ENCODE measurements at regions of chr11 and their contacts with region 1.

Region 1: DNA sequence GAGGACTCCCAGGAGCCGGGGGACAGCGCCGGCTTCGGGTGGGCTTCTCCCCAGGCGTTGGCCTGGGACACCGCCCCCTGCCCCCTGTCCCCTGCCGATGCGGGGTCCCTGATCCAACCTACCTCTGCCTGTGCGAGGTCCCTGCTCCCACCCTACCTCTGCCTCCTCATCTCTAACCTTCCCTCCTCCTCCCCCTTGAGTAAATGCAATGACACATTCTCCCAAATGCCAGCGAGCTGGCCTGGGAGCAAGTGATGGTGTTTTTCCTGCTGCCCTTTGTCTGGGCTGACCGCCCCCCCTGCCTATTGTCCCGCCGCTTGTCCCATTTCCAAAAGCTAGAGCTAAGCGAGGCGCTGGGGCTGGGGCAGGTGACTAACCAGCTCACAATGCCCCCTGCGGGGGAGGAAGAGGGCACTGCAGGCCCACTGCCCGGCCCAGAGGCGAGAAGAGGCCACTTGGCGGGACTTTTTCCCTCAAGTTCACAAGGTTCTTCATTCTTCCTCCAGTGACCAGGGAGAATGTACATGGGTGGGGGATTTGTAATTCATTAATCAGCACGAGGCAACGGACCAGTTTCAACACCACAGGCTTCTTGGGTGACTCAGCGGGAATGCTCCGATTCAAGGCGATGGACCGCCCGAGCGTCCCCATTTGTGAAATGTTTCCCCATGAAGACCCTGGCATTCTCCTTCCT is 674 bp upstream of the CLCF1 start:
- DNase-seq: peak; percentile 95
- H3K4me3 ChIP-seq: peak overlapping the region; percentile 86
- H3K4me3 Mint-ChIP-seq: peak overlapping the region; percentile 95
- H3K27ac Mint-ChIP-seq: peak overlapping the region; percentile 83
- H3K4me1 ChIP-seq: peaks cover 31% of the 10 kb centered on the region
- H3K4me1 Mint-ChIP-seq: no peaks in the 10 kb centered on the region
- H3K27me3 ChIP-seq: no peaks in the 10 kb centered on the region
- H3K27me3 Mint-ChIP-seq: no peaks in the 10 kb centered on the region
- CTCF ChIP-seq: peak; percentile 89 to 97

Region 2: DNA sequence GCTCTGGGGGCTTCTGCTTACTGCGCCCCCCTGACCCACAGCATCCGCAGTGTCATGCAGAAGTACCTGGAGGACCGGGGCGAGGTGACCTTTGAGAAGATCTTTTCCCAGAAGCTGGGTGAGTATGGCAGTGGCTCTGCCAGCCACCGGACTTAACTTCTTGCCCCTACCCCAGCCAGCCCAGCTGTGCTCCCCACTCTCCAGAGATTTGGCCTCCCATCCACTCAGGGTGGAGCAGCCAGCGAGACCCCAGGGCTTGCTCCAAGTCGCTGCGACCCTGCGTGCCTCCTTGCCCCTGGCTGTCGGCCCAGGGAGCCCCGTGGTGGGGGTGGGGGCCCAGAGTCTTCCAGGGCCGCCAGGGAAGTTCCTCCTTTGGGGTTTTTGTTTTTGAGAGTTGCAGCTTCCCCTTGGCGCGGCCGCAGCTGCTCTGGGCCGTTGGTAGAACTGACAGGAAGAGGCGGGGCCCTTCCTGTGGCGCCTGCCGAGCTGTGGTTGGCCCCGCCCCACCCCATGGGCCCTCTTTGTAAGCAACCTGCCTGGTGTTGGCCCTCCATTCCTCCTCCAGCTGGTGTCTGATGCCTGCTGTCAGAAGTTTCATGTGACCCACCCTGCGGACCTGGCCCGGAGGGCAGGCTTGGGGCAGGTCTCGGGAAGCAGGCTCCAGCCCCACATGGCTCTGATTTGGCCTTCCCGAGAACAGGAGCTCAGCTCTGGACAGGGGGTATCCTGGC is 96.7 kb before region 1 on chr11:
- CTCF ChIA-PET with region 1: no interaction called
- POLR2A ChIA-PET with region 1: no interaction called
- intact Hi-C with region 1: no loop called
- DNase-seq: no peak
- H3K4me3 ChIP-seq: no peak overlapping the region
- H3K4me3 Mint-ChIP-seq: no peak overlapping the region
- H3K27ac Mint-ChIP-seq: no peak overlapping the region
- H3K4me1 ChIP-seq: no peaks in the 10 kb centered on the region; the same call in 1 of the 2 replicates
- H3K4me1 Mint-ChIP-seq: no peaks in the 10 kb centered on the region
- H3K27me3 ChIP-seq: no peaks in the 10 kb centered on the region
- H3K27me3 Mint-ChIP-seq: no peaks in the 10 kb centered on the region
- CTCF ChIP-seq: no peak

Region 3: GRCh38 chr11:67288452-67289225 is 85.4 kb before region 1 on chr11:
- CTCF ChIA-PET with region 1: no interaction called
- POLR2A ChIA-PET with region 1: interaction called, 27 read pairs
- intact Hi-C with region 1: no loop called
- DNase-seq: peak; percentile 94 to 95
- H3K4me3 ChIP-seq: peak overlapping the region; percentile 91
- H3K4me3 Mint-ChIP-seq: peak overlapping the region; percentile 99
- H3K27ac Mint-ChIP-seq: peak overlapping the region; percentile 90
- H3K4me1 ChIP-seq: peaks cover 20% of the 10 kb centered on the region
- H3K4me1 Mint-ChIP-seq: peaks cover 29% of the 10 kb centered on the region
- H3K27me3 ChIP-seq: no peaks in the 10 kb centered on the region
- H3K27me3 Mint-ChIP-seq: no peaks in the 10 kb centered on the region
- CTCF ChIP-seq: peak; percentile 51 to 56

Region 4: DNA sequence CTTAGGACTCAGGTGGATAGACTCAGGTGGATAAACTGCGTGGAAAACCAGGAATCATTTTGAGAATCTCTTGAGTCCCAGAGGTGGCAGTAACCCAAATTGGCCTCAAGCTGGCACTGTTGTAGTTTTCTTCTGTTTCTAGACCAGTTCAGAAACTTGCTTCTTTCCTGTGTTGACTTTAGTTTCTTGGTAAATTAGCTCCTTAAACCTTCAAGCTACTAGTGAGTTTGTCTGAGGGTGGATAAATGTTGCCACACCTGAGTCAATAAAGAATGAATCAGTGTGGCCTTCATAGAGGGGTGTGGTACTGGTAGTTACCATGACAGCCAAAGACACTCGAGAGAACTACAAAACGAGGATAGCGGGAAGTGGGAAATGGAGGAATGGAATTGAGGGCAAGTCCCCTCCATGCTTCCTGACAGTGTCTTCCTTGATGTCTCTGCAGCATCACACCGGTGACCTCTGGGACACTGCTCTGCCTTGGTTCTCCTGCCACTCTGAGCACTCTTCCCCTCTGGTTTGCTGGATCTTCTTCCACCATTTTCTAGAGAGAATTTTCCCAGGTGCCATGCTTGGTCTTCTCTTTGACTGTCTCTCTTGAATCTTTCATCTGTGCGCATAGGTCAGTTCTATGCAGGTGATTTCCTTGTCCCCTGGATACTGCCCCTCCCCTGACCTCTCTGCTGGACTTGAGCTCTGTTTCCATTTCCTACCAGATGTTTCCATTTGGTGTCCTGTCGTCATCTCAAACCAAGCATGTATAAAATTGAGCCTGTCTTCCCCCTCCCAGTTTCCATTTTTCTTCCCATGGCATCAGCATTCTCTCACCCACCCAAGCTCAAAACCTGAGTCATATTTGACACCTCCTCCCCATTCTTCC is 27.9 kb before region 1 on chr11:
- CTCF ChIA-PET with region 1: interaction called, 775 read pairs
- POLR2A ChIA-PET with region 1: interaction called, 11 read pairs
- intact Hi-C with region 1: loop called (anchors 1 kb)
- DNase-seq: peak; percentile 82 to 87
- H3K4me3 ChIP-seq: no peak overlapping the region
- H3K4me3 Mint-ChIP-seq: peak overlapping the region; percentile 4
- H3K27ac Mint-ChIP-seq: peak overlapping the region; percentile 41
- H3K4me1 ChIP-seq: peaks cover 32% of the 10 kb centered on the region
- H3K4me1 Mint-ChIP-seq: peaks cover 35% of the 10 kb centered on the region
- H3K27me3 ChIP-seq: no peaks in the 10 kb centered on the region
- H3K27me3 Mint-ChIP-seq: no peaks in the 10 kb centered on the region
- CTCF ChIP-seq: peak; percentile 89 to 99

Region 5: DNA sequence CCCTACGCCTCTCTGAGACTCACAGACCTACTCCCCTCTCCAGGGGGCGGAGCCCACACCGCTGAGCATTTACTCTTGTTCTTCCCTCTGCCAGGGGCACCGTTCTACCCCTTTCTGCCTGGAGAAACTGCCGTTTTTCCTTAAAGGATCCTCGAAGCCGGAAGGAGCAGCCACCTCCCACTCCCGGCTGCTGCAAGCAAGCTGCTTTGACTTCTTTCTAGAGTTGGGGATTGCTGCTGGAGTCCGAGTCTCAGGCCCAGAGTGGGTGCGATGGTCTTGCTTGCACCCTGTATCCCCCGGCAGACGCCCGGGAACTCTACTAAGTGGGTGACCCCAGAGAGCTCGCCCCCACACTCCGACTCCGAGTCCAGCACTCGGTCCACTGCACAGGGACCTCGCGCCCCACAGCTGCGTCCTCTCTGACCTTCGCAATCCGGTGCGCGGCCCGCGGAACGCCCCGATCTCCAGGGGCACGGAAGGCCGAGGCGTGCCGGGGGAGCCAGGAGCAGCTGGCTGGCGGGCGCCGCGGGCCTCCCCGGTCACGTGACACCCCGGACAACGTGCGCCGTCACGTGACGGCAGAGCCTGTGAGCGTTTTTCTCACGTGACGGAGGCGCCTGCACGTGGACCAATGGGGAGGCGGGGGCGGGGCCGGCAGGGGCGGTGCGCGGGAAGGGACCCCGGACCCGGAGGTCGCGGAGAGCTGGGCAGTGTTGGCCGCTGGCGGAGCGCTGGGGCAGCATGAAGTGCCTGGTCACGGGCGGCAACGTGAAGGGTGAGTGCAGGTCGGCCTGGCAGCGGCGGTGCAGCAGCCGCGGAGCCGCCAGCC is 17.4 kb after region 1 on chr11 and contains the start of gene RAD9A:
- CTCF ChIA-PET with region 1: interaction called, 11 read pairs
- POLR2A ChIA-PET with region 1: interaction called, 5 read pairs
- intact Hi-C with region 1: no loop called
- DNase-seq: peak; percentile 98 to 99
- H3K4me3 ChIP-seq: peak within 1 kb of the TSS; percentile 80
- H3K4me3 Mint-ChIP-seq: peak within 1 kb of the TSS; percentile 76
- H3K27ac Mint-ChIP-seq: peak within 1 kb of the TSS; percentile 63
- H3K4me1 ChIP-seq: peaks cover 5% of the 10 kb centered on the region; the same call in 1 of the 2 replicates
- H3K4me1 Mint-ChIP-seq: peaks cover 23% of the 10 kb centered on the region
- H3K27me3 ChIP-seq: no peaks in the 10 kb centered on the region
- H3K27me3 Mint-ChIP-seq: no peaks in the 10 kb centered on the region
- CTCF ChIP-seq: no peak
- total RNA-seq, gene RAD9A: 55.1 and 63.5 TPM in 2 replicates

Region 6: DNA sequence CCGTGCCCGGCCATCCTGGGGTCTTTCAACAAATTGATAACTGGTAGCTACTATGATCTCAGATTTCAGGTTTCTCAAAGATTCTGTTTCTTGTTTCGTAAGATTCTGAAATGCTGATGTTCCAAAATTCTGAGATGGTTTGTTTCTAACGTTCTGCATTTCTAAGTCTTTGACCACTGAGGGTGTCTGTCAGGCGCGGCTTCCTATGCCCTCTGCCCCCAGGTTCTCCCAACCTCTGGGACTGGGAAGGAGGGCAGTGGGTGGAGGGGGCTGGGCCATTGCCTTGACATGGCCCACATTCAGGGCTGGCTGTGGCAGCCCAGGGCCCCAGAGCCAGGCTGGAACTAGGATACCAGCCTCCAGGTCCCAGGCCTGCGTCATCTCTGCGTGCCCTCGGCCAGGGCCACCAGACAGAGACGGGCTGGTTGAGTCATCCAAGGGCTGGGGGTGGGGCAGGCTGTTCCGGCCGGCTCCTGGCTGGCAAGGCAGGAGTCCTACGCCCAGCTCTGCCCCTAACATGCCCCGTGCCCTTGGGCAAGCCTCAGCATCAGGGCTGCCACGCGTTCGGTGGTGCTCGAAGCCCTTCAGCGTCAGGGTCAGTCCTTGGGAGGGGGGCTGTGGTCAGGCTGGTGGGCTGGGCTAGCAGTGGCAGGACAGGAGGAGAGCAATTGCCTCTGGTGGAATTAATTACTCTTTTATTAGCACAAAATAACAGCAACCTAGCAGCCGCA is 89.8 kb after region 1 on chr11:
- CTCF ChIA-PET with region 1: no interaction called
- POLR2A ChIA-PET with region 1: no interaction called
- intact Hi-C with region 1: no loop called
- DNase-seq: peak in 1 of 2 experiments; percentile 43
- H3K4me3 ChIP-seq: peak overlapping the region; percentile 39
- H3K4me3 Mint-ChIP-seq: peak overlapping the region; percentile 96
- H3K27ac Mint-ChIP-seq: peak overlapping the region; percentile 86
- H3K4me1 ChIP-seq: peaks cover 23% of the 10 kb centered on the region
- H3K4me1 Mint-ChIP-seq: peaks cover 20% of the 10 kb centered on the region
- H3K27me3 ChIP-seq: no peaks in the 10 kb centered on the region
- H3K27me3 Mint-ChIP-seq: no peaks in the 10 kb centered on the region
- CTCF ChIP-seq: no peak